SK-N-SH (cell line): ENCODE measurements at regions of chr10 and their contacts with region 1.

Region 1: DNA sequence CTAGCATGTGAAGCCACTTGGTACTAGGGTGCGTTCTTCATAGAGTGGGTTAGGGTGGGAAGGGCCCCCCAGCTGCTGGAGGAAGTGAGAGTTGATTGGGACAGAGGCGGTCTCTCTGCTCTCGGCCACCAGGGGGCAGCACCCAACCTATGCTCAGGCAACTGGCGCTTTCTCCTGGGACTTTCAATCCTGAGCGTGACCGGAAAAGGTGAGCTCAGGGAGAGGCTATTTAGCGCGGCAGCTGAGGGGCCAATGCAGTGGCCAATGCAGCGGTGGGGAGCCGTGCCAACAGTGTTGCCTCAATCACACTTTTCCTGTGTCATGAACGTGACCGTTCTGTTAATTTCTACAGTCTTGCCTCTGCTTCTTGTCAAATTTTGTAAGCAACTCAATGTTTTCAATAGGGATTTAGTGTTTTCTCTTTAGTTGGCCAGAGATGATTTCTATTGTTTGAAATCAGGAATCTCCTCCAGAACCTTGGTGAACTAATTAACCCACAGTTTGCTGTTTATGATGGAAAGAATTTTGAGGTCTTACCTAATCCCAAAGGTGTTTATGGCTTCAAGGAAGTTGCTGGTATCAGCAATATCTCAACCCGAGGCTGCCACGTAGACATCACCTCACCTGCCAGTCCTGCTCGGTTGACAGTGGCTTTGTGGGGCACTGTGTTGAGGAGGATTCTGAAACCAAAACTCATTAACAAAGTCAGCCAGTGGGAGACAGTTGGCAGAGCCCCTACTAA is 67.9 kb upstream of the PDZD8 start:
- DNase-seq: peak; percentile 76
- H3K4me3 ChIP-seq: no peak overlapping the region; a peak in 1 of 4 replicates
- H3K27ac ChIP-seq: no peak overlapping the region
- H3K4me1 ChIP-seq: no peaks in the 10 kb centered on the region; a peak in 1 of 4 replicates
- H3K27me3 ChIP-seq: no peaks in the 10 kb centered on the region
- CTCF ChIP-seq: peak; percentile 64
- EP300 ChIP-seq: no peak
- RAD21 ChIP-seq: peak; percentile 59

Region 2: DNA sequence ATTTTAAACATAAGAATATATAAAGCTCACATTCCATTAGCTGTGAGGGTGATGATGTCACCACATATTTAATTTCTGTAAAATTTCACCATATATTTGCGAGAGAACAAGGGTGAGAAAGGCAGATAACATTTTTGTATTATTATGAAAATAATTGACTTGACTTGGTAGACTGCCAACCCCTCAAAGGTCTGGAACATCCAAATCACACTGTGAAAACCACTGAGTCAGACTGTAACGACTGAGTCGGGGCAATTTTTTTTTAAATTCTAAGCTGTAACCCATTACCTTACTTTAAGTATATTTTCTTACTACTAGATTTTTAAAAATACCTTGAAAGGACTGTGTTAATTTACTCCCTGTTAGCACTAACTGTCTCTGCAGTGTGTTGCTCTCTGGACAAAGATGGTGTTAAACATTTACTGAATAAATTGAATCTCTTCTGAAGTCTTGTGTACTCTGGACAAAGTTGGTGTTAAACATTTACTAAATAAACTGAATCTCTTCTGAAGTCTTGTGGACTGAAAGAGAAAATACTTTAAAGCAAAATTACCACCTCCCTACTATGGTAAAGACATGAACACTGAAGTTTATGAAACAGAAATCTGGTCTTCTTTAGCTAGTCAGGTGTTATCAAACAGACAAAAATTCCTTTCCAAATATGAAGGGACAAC is 82.0 kb before region 1 on chr10:
- CTCF ChIA-PET with region 1: interaction called, 10 read pairs
- POLR2A ChIA-PET with region 1: no interaction called
- DNase-seq: no peak
- H3K4me3 ChIP-seq: no peak overlapping the region
- H3K27ac ChIP-seq: peak overlapping the region in 1 of 2 experiments; percentile 30; a peak in 3 of 4 replicates
- H3K4me1 ChIP-seq: peaks cover 0 to 37% of the 10 kb centered on the region in 2 experiments; a peak in 3 of 4 replicates
- H3K27me3 ChIP-seq: no peaks in the 10 kb centered on the region
- CTCF ChIP-seq: no peak
- EP300 ChIP-seq: no peak
- RAD21 ChIP-seq: no peak

Region 3: DNA sequence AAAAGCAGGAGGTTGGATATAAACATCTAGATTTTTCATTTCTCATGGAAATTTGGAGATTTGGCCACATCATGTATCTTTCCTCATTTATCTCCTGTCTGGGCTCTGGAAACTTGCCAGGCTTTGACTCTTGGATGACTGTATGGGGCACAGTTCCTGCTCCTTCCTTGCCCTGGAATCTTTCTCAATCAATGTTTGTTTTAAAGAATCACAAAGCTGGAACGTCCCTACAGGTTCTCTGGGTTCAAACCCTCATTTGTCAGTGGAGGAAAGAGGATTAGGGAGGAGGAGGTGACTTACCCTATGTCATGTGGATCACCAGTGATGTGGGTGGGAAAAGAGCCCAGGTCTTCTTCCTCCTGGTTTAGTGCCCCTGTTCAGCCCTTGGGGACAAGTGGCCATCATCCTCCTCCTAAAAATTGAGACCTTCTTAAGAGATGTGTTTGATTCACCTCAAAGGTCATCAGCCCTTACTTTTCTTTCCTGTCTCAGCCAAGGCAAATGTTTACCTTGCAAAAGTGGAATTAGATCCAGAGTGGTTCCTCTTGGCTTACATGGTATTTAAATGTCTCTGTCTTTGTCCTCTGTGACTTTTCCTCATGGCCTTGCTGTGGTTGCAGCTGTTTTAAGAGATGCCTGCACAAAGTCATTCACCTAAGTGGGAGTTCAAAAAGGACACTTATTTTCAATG is 29.0 kb before region 1 on chr10:
- CTCF ChIA-PET with region 1: interaction called, 11 read pairs
- POLR2A ChIA-PET with region 1: no interaction called
- DNase-seq: no peak
- H3K4me3 ChIP-seq: no peak overlapping the region
- H3K27ac ChIP-seq: no peak overlapping the region
- H3K4me1 ChIP-seq: peaks cover 0 to 8% of the 10 kb centered on the region in 2 experiments; a peak in 1 of 4 replicates
- H3K27me3 ChIP-seq: no peaks in the 10 kb centered on the region
- CTCF ChIP-seq: no peak
- EP300 ChIP-seq: no peak
- RAD21 ChIP-seq: no peak

Region 4: DNA sequence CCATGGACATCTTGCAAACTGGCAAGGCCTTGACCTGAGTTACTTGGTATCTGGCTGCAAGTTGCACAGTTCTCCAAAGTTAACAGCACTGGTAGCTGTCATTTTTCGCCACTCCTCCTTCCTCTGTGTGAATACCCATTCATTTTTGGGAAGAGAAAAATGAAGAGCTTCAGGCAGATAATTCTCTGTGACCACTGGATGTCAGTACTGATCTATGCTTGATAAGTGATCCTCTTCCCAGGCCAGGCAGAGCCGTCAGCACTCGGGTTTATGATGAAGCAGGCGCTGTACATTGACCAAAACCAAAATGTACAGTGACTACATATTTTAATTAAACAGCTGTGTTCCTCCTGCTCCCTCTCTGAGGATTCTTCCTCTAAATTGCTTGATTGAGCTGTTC is 12.0 kb before region 1 on chr10:
- CTCF ChIA-PET with region 1: interaction called, 67 read pairs
- POLR2A ChIA-PET with region 1: no interaction called
- DNase-seq: no peak
- H3K4me3 ChIP-seq: no peak overlapping the region
- H3K27ac ChIP-seq: no peak overlapping the region
- H3K4me1 ChIP-seq: no peaks in the 10 kb centered on the region
- H3K27me3 ChIP-seq: no peaks in the 10 kb centered on the region
- CTCF ChIP-seq: no peak
- EP300 ChIP-seq: no peak
- RAD21 ChIP-seq: no peak

Region 5: GRCh38 chr10:117472872-117473271 is 29.8 kb after region 1 on chr10:
- CTCF ChIA-PET with region 1: interaction called, 13 read pairs
- POLR2A ChIA-PET with region 1: no interaction called
- DNase-seq: no peak
- H3K4me3 ChIP-seq: no peak overlapping the region
- H3K27ac ChIP-seq: no peak overlapping the region
- H3K4me1 ChIP-seq: no peaks in the 10 kb centered on the region; a peak in 1 of 4 replicates
- H3K27me3 ChIP-seq: no peaks in the 10 kb centered on the region
- CTCF ChIP-seq: no peak
- EP300 ChIP-seq: no peak
- RAD21 ChIP-seq: no peak